Activated CD4-positive, alpha-beta T cell treated with anti-CD3 and anti-CD28 coated beads for 36 hours (primary cell): ENCODE measurements at regions of chr4 and their contacts with region 1.

Region 1: GRCh38 chr4:186191200-186192065 is at the start of gene CYP4V2:
- DNase-seq: peak; percentile 93
- ATAC-seq: peak; percentile 84
- H3K4me3 Mint-ChIP-seq: peak within 1 kb of the TSS; percentile 85
- H3K27ac Mint-ChIP-seq: peak within 1 kb of the TSS; percentile 94
- H3K4me1 Mint-ChIP-seq: peaks cover 37% of the 10 kb centered on the region
- H3K27me3 Mint-ChIP-seq: no peaks in the 10 kb centered on the region
- total RNA-seq, gene CYP4V2: 4.1 to 4.5 TPM

Region 2: GRCh38 chr4:186144142-186144955 is 47.1 kb before region 1 on chr4:
- CTCF ChIA-PET with region 1: interaction called, 3 read pairs
- POLR2A ChIA-PET with region 1: no interaction called
- intact Hi-C with region 1: loop called in 1 of 2 experiments (anchors 5 kb)
- DNase-seq: peak; percentile 46
- ATAC-seq: peak; percentile 69
- H3K4me3 Mint-ChIP-seq: peak overlapping the region; percentile 65
- H3K27ac Mint-ChIP-seq: no peak overlapping the region
- H3K4me1 Mint-ChIP-seq: peaks cover 7% of the 10 kb centered on the region
- H3K27me3 Mint-ChIP-seq: peaks cover 28% of the 10 kb centered on the region

Region 3: GRCh38 chr4:186201535-186202230 is 10.2 kb after region 1 on chr4:
- CTCF ChIA-PET with region 1: interaction called, 10 read pairs
- POLR2A ChIA-PET with region 1: interaction called, 5 read pairs
- intact Hi-C with region 1: loop called in 1 of 2 experiments (anchors 1 kb)
- DNase-seq: peak; percentile 78
- ATAC-seq: peak; percentile 94
- H3K4me3 Mint-ChIP-seq: peak overlapping the region; percentile 5
- H3K27ac Mint-ChIP-seq: peak overlapping the region; percentile 30
- H3K4me1 Mint-ChIP-seq: peaks cover 11% of the 10 kb centered on the region
- H3K27me3 Mint-ChIP-seq: no peaks in the 10 kb centered on the region

Region 4: GRCh38 chr4:186537843-186538521 is 346.5 kb after region 1 on chr4:
- CTCF ChIA-PET with region 1: no interaction called
- POLR2A ChIA-PET with region 1: no interaction called
- intact Hi-C with region 1: no loop called
- DNase-seq: no peak
- ATAC-seq: no peak
- H3K4me3 Mint-ChIP-seq: no peak overlapping the region
- H3K27ac Mint-ChIP-seq: no peak overlapping the region
- H3K4me1 Mint-ChIP-seq: no peaks in the 10 kb centered on the region
- H3K27me3 Mint-ChIP-seq: no peaks in the 10 kb centered on the region

Region 5: DNA sequence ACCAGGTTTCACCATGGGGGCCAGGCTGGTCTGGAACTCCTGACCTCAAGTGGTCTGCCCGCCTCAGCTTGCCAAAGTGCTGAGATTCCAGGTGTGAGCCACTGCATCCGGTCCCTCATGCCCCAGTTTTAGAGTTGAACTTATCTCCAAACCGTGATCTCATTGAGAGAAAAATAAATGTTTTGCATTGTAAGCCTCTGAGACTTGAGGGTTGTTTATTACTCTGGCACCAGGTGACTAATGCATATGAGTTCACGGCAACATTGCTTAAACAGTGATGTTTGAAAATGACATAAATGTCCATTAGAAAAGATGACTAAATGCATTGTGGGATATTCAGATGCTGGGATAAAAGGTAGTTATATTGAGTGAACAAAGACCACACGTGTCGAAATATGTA is 555.1 kb after region 1 on chr4:
- CTCF ChIA-PET with region 1: no interaction called
- POLR2A ChIA-PET with region 1: no interaction called
- intact Hi-C with region 1: no loop called
- DNase-seq: no peak
- ATAC-seq: no peak
- H3K4me3 Mint-ChIP-seq: no peak overlapping the region
- H3K27ac Mint-ChIP-seq: no peak overlapping the region
- H3K4me1 Mint-ChIP-seq: no peaks in the 10 kb centered on the region
- H3K27me3 Mint-ChIP-seq: peaks cover 2% of the 10 kb centered on the region